Dorsolateral prefrontal cortex (tissue), 120 donors: ENCODE measurements at regions of chr18 and their contacts with region 1.

Region 1: GRCh38 chr18:63320046-63320689 is 599 bp upstream of the BCL2 start:
- DNase-seq: peak; percentile 60 to 88 (median 82)
- H3K4me3 ChIP-seq: peak overlapping the region in 57 of 59 donors; percentile 7 to 93 (median 81)
- H3K27ac ChIP-seq: peak overlapping the region in 52 of 59 donors; percentile 26 to 93 (median 81)
- H3K27me3 ChIP-seq: no peaks in the 10 kb centered on the region
- CTCF ChIP-seq: peak in 4 of 56 donors; percentile 5 to 8 (median 7)

Region 2: GRCh38 chr18:63074981-63075404 is 245.2 kb before region 1 on chr18:
- intact Hi-C with region 1: loop called in 1 of 2 experiments (anchors 1 kb)
- DNase-seq: peak; percentile 31 to 88 (median 80)
- H3K4me3 ChIP-seq: peak overlapping the region; percentile 21 to 71 (median 51)
- H3K27ac ChIP-seq: peak overlapping the region in 32 of 59 donors; percentile 10 to 79 (median 56)
- H3K27me3 ChIP-seq: no peaks in the 10 kb centered on the region
- CTCF ChIP-seq: peak in 33 of 56 donors; percentile 5 to 59 (median 30)

Region 3: DNA sequence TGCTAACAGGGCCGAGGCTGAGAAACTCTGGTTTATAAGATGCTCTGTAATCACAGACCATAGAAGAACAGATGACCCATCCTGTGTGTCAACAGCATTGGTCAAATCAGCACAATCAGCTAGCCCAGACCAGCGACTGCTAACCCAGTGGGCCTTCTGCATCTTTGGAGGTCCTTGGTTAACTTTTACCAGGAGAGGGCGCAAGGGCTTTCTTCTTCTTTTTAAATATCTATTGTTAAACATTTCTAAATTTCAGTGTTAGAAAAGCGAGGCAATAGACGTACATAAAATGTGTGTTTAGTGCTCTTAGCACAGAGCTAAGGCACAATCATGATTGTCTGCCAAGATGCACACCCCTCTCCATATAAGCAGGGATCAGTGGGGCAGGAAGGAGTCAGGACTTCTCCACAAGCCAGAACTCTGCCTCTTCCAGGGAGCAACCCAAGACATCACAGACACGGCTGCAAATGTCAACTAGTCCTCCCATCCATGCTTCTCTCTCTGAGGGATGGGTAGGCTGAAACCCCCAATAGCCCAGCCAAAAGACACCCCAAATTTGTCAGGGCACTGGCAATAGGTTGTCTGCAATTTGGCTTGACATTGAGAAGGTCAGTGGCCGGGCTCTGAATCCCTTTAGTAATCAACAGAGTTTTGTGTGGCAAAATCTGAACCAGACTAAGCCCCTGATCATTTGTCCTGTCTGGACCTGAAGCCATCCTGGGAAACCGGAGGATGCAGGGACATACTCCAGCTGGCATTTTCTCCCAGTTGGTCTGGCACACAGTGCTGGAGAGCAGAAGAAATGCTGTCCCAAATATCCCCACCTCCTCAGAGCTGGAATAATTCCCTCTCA is 188.8 kb before region 1 on chr18:
- intact Hi-C with region 1: loop called (anchors 1 to 2 kb)
- DNase-seq: peak in 2 of 10 donors; percentile 53 to 71
- H3K4me3 ChIP-seq: peak overlapping the region in 2 of 59 donors; percentile 4 to 8
- H3K27ac ChIP-seq: peak overlapping the region in 35 of 59 donors; percentile 7 to 67 (median 41)
- H3K27me3 ChIP-seq: no peaks in the 10 kb centered on the region
- CTCF ChIP-seq: peak; percentile 22 to 79 (median 66)

Region 4: GRCh38 chr18:63262369-63263335 is 57.5 kb before region 1 on chr18:
- intact Hi-C with region 1: loop called in 1 of 2 experiments (anchors 2 kb)
- DNase-seq: peak in 4 of 10 donors; percentile 33 to 51 (median 45)
- H3K4me3 ChIP-seq: peak overlapping the region in 40 of 59 donors; percentile 0 to 59 (median 24)
- H3K27ac ChIP-seq: peak overlapping the region; percentile 13 to 97 (median 88)
- H3K27me3 ChIP-seq: no peaks in the 10 kb centered on the region
- CTCF ChIP-seq: peak in 16 of 56 donors; percentile 5 to 40 (median 21)

Region 5: DNA sequence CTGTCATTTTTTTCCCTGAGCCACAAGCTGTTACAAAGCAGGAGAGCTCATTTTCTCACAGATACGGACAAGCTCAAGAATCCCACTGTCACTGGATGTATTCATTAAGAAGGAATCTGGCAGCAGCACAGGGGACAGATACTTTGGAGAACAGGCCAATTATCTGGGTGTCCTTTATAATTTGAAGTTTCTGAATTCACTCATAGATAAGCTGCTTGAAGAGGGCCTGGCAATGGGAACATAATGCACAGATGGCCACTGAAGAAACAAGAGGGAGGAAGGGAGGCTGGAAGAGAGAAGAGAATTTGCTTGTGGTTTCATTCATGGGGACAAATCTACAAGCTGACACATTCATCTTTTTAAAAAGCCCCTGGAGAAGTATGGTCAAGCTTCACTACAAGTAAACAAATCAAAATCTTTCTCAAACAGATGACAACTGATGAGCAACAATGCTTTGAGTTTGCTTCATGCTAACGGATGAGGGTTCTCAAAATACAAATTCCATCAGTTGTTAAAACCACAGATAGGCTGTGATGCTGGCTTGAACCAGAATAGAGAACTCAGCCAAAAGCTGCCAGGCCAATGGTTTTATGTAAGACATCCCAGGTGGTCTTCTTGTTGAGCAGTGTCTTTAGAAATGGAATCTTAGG is 12.5 kb before region 1 on chr18:
- intact Hi-C with region 1: no loop called
- DNase-seq: no peak
- H3K4me3 ChIP-seq: peak overlapping the region in 1 of 59 donors; percentile 1
- H3K27ac ChIP-seq: peak overlapping the region in 24 of 59 donors; percentile 1 to 52 (median 20)
- H3K27me3 ChIP-seq: no peaks in the 10 kb centered on the region
- CTCF ChIP-seq: no peak

Region 6: DNA sequence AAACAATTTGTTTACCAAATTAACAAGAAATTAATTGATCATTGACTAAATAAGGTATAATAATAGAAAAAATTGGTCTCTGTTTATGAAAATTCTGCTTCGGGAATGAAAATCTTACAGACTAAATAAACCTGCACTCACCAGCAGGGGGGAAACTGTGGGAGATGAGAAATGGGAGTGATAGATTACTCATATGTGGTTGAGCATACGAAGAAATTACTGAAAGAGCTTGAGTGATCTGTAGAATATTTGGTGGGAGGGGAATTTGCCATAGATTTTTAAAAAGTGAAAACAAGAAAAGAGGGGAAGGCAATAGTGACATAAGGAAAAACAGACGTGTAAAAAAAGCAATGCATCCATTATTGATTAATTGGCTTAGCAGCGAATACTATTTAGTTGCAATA is 631.1 kb after region 1 on chr18:
- intact Hi-C with region 1: no loop called
- DNase-seq: no peak
- H3K4me3 ChIP-seq: no peak overlapping the region
- H3K27ac ChIP-seq: no peak overlapping the region
- H3K27me3 ChIP-seq: peaks cover 0 to 15% (median 0%) of the 10 kb centered on the region in 45 donors
- CTCF ChIP-seq: peak in 9 of 56 donors; percentile 4 to 27 (median 15)